Panc1 (cell line): ENCODE measurements at regions of chr3 and their contacts with region 1.

Region 1: GRCh38 chr3:27789420-27789819 is 67.3 kb upstream of the EOMES start:
- DNase-seq: no peak
- ATAC-seq: no peak
- H3K4me3 ChIP-seq: no peak overlapping the region
- H3K27ac ChIP-seq: no peak overlapping the region
- H3K4me1 ChIP-seq: no peaks in the 10 kb centered on the region
- H3K27me3 ChIP-seq: no peaks in the 10 kb centered on the region; the same call in 1 of the 2 replicates
- CTCF ChIP-seq: no peak

Region 2: DNA sequence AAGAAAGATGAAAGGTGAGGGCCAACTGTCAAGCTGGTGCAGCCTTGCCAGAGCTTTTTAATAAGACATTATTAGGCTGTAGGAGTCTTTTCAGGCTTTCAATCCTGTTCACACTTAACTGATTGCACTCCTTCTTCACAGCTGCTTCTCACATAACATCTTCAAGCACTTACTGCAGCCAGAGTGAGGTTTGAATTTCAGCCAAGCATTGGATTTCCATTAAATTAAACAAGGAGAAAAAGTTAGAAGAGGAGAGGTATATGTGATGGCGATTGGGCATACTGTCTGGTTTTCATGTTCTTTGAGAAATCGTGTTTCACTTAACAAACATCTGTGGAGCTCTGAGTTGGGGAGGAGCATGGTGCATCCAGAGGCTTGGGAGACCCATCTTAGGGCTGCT is 1559.6 kb before region 1 on chr3:
- CTCF ChIA-PET with region 1: no interaction called
- POLR2A ChIA-PET with region 1: no interaction called
- in situ Hi-C with region 1: no loop called
- intact Hi-C with region 1: no loop called
- DNase-seq: no peak
- ATAC-seq: no peak
- H3K4me3 ChIP-seq: no peak overlapping the region
- H3K27ac ChIP-seq: no peak overlapping the region
- H3K4me1 ChIP-seq: no peaks in the 10 kb centered on the region
- H3K27me3 ChIP-seq: no peaks in the 10 kb centered on the region
- CTCF ChIP-seq: no peak

Region 3: DNA sequence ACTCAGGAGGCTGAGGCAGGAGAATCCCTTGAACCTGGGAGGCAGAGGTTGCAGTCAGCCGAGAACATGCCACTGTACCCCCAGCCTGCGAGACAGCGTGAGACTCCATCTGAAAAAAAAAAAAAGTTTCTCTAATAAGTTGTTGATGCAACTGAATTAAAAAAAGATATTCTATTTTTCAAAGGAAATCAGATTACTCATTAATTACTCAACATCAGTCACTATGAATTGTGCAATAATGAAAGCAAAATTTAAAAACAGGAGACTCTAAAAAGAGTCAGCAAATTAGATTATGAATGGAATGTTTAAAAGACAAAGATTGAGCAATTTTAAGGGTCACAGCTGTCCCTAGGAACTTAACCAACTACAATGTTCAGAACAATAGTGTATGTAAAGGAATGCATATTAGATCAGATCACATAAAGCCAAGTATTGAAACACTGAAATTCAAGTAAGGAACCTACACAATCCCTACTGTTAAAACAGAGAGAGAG is 245.0 kb before region 1 on chr3:
- CTCF ChIA-PET with region 1: no interaction called
- POLR2A ChIA-PET with region 1: no interaction called
- in situ Hi-C with region 1: no loop called
- intact Hi-C with region 1: no loop called
- DNase-seq: no peak
- ATAC-seq: no peak
- H3K4me3 ChIP-seq: no peak overlapping the region
- H3K27ac ChIP-seq: peak overlapping the region; percentile 59; the same call in 1 of the 2 replicates
- H3K4me1 ChIP-seq: peaks cover 8% of the 10 kb centered on the region; the same call in 1 of the 2 replicates
- H3K27me3 ChIP-seq: no peaks in the 10 kb centered on the region
- CTCF ChIP-seq: no peak

Region 4: DNA sequence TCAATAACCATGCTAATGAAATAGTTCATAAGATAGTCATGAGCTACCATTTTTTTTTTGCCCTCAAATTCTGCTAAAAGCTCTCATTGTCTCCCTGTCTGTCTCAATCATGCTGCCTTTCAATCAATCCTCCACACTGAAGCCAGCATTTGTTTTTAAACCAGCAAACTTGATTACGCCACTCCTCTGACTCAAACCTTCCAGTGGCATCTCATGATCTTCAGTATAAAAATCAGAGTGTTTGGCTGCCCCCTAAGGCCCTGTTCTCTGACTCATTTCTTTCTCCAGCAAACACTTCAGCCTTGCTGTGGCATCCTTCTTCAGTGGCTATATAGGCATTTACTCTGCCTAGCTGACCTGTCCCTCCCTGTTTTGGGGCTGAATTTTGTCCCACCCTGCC is 31.3 kb before region 1 on chr3:
- CTCF ChIA-PET with region 1: interaction called, 3 read pairs
- POLR2A ChIA-PET with region 1: interaction called, 11 read pairs
- in situ Hi-C with region 1: no loop called
- intact Hi-C with region 1: no loop called
- DNase-seq: peak; percentile 52
- ATAC-seq: no peak
- H3K4me3 ChIP-seq: no peak overlapping the region
- H3K27ac ChIP-seq: no peak overlapping the region
- H3K4me1 ChIP-seq: no peaks in the 10 kb centered on the region
- H3K27me3 ChIP-seq: no peaks in the 10 kb centered on the region
- CTCF ChIP-seq: no peak

Region 5: GRCh38 chr3:27800261-27800660 is 10.8 kb after region 1 on chr3:
- CTCF ChIA-PET with region 1: no interaction called
- POLR2A ChIA-PET with region 1: no interaction called
- in situ Hi-C with region 1: no loop called
- intact Hi-C with region 1: no loop called
- DNase-seq: no peak
- ATAC-seq: no peak
- H3K4me3 ChIP-seq: no peak overlapping the region
- H3K27ac ChIP-seq: no peak overlapping the region
- H3K4me1 ChIP-seq: no peaks in the 10 kb centered on the region
- H3K27me3 ChIP-seq: no peaks in the 10 kb centered on the region
- CTCF ChIP-seq: no peak